Activated CD4-positive, alpha-beta memory T cell treated with anti-CD3 and anti-CD28 coated beads, Interleukin-2, amount 10 ng/mL, durations not matched to agents 7 days and 5 days (primary cell): ENCODE measurements at regions of chr1 and their contacts with region 1.

Region 1: DNA sequence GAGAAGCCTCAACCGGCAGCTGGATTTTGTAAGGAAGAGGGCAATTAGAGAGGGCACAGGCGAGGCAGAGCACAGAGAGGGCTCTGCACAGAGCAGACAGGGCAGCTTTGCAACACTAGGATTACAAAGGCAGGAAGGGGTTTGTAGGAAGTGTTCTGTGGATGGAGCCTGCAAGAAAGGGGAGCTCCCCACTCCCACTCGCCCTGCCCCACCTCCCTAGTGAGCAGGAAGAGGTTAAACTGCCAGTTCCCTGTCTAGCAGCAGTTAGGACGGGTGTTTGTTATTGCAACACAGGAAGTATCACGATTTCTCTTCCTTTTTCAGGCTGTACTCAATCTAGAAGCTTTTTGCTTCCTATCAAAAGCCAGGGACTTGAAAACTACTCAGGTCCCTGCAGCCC is 63.3 kb upstream of the LRRC8D start:
- DNase-seq: peak; percentile 65
- H3K4me3 Mint-ChIP-seq: peak overlapping the region; percentile 67
- H3K27ac Mint-ChIP-seq: peak overlapping the region; percentile 92
- H3K4me1 Mint-ChIP-seq: peaks cover 90% of the 10 kb centered on the region
- H3K27me3 Mint-ChIP-seq: no peaks in the 10 kb centered on the region

Region 2: GRCh38 chr1:89632657-89633247 is 124.8 kb before region 1 on chr1 and contains the start of gene LRRC8C:
- CTCF ChIA-PET with region 1: interaction called, 174 read pairs
- POLR2A ChIA-PET with region 1: interaction called, 119 read pairs
- DNase-seq: peak; percentile 90
- H3K4me3 Mint-ChIP-seq: peak within 1 kb of the TSS; percentile 88
- H3K27ac Mint-ChIP-seq: peak within 1 kb of the TSS; percentile 89
- H3K4me1 Mint-ChIP-seq: peaks cover 71% of the 10 kb centered on the region
- H3K27me3 Mint-ChIP-seq: no peaks in the 10 kb centered on the region
- total RNA-seq, gene LRRC8C: 52.5 to 55.6 TPM

Region 3: DNA sequence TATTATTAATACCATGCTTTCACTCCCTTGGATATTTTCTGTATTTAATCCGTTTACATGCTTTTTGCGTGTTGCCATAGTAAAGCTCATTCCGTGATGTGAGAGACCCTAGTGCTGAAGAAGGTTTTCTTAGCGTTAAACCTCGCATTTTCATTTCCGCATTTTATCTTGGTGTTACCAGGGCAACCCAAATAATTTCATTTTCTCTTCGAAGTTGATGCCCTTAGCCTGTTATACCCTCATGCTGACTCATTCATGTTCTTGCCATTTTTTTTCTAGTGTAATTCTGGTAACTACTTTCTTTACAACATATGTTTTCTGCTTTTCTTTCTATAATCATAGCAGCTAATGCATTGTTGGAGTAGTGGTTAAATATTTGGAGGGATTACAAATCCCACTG is 87.4 kb before region 1 on chr1:
- CTCF ChIA-PET with region 1: interaction called, 32 read pairs
- POLR2A ChIA-PET with region 1: interaction called, 14 read pairs
- DNase-seq: no peak
- H3K4me3 Mint-ChIP-seq: peak overlapping the region; percentile 56
- H3K27ac Mint-ChIP-seq: peak overlapping the region; percentile 71
- H3K4me1 Mint-ChIP-seq: peaks cover 89% of the 10 kb centered on the region
- H3K27me3 Mint-ChIP-seq: no peaks in the 10 kb centered on the region

Region 4: DNA sequence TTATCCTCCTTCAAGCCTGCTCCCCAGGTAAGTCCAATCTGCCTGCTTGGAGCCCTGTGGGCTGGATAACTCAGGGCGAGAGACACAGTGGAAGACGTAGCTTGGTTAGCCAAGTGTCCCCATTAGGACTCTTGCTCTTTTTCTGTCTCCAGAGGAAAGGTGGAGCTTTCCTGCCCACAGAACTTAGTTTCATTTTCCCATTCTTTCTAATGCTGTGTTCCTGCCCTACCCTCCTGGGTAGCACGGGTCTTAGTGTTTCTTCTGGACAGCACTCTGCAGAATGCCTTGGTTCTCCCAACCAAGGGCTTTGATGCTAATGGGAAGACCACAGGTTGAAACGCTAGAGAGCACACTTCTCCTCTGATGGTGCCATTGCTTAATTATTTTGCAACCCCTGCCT is 29.2 kb before region 1 on chr1:
- CTCF ChIA-PET with region 1: interaction called, 17 read pairs
- POLR2A ChIA-PET with region 1: interaction called, 28 read pairs
- DNase-seq: no peak
- H3K4me3 Mint-ChIP-seq: peak overlapping the region; percentile 48
- H3K27ac Mint-ChIP-seq: peak overlapping the region; percentile 57
- H3K4me1 Mint-ChIP-seq: peaks cover 88% of the 10 kb centered on the region
- H3K27me3 Mint-ChIP-seq: no peaks in the 10 kb centered on the region

Region 5: GRCh38 chr1:89865498-89866385 is 108.2 kb after region 1 on chr1:
- CTCF ChIA-PET with region 1: no interaction called
- POLR2A ChIA-PET with region 1: no interaction called
- DNase-seq: no peak
- H3K4me3 Mint-ChIP-seq: no peak overlapping the region
- H3K27ac Mint-ChIP-seq: no peak overlapping the region
- H3K4me1 Mint-ChIP-seq: peaks cover 40% of the 10 kb centered on the region
- H3K27me3 Mint-ChIP-seq: no peaks in the 10 kb centered on the region